Right ventricle myocardium inferior (tissue), 1 donor: ENCODE measurements at regions of chr22 and their contacts with region 1.

Region 1: DNA sequence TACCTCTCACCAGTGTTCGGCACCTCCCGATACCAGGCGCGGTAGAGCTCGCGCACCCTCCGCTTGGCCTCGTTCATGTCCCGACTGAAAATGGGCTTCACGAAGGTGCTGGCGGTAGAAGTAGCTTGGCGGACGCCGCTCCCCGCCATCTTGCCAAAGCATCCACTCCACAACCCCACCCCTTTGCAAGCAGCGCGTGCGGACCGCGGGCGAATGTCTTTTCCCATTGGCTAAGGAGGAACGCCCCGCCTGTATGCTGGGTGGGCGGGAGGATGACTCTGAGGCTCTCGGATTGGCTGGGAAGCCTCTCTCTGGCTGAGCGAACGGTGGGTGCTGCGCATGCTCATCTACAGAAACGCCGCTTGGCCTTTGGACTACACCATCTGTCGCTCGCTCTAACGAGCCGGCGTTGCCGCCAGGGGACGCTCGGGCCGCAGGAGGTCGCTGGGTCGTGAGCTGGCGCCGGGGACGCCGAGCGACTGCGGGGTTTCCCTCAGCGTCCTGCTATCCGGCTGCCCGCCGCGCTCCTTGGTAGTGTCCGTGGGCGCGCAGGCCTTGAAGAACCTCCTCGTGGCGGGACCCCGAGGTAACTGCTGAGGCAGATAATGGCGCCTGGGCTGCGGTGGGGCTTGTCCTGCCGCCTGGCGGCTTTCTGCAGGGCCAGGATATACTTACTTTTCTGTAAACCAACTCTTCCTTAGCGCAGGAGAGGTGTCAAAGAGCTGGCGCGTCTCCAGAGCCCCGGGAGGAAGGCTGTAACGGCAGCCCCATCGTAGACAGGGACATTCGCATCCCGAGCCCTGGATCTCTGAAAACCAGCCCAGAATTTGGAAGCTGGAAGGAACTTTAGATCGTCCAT is at the start of gene NDUFA6:
- DNase-seq: peak; percentile 99
- ATAC-seq: peak; percentile 98
- total RNA-seq, gene NDUFA6: 296 TPM

Region 2: DNA sequence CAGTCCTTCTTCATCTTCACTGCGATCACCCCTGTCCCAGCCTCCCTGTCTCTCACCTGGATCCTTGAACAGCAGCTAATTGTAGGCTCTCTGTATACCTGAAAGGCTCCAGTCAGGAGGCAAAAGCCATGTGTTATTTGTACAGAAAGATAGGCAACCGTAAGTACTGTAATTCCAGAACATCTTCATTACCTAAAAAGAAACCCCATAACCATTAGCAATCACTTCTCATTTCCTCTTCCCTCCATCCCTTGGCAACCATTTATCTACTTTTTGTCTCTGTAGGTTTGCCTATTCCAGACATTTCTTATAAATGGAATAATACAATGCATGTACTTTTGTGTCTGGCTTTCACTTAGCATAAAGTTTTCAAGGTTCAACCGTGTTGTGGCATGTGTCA is 38.1 kb before region 1 on chr22:
- intact Hi-C with region 1: no loop called
- DNase-seq: no peak
- ATAC-seq: no peak

Region 3: DNA sequence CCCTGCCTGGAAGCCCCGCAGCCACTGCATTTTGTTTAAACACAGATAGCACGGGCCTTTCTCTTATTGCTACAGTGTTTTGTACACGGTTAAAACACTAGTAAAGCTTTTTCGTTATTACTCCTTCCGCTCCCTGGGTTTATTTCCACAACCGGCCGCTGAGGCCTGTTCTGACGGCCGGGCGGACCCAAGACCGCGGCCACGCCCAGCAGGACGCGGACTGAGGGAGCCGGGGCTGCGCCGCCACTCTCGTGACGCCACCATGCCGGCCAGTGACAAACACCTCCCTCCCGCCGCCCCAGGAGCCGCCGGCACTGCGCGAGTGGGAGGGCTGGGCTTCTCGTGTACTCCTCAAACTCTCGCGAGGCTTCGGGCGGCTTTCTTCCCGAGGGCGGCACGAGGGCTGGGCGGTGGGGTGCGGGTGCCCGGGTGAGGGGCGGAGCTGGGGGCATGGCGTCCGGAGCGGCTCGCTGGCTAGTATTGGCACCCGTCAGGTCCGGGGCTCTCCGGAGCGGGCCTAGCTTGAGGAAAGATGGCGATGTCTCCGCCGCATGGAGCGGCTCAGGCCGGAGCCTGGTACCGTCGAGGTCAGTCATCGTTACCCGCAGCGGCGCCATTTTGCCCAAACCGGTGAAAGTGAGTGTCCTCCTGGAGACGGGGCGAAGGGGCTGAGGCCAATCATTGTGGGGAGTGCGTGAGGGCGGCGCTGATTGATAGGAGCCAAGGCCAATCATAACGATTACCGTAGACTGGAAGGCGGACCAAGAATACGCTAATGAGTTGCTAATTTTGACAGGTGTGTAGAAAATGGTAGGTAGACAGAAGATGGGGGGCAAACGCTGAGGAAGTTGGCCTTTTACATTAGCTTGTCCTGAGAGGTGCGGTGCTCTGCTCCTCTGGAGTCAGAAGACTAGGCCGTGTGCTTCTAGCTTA is 11.2 kb before region 1 on chr22 and contains the start of gene SMDT1:
- intact Hi-C with region 1: loop called (anchors 1 kb)
- DNase-seq: peak; percentile 100
- ATAC-seq: peak; percentile 95
- total RNA-seq, gene SMDT1: 172 TPM

Region 4: GRCh38 chr22:42437488-42438292 is 346.9 kb after region 1 on chr22:
- intact Hi-C with region 1: loop called (anchors 5 kb)
- DNase-seq: peak; percentile 88
- ATAC-seq: peak; percentile 87

Region 5: GRCh38 chr22:42553475-42554361 is 462.9 kb after region 1 on chr22 and contains the start of gene SERHL2:
- intact Hi-C with region 1: loop called (anchors 5 kb)
- DNase-seq: peak; percentile 90
- ATAC-seq: peak; percentile 98
- total RNA-seq, gene SERHL2: 2.6 TPM